ENCODE measurements at regions of chr3 and their contacts with region 1.

Region 1: DNA sequence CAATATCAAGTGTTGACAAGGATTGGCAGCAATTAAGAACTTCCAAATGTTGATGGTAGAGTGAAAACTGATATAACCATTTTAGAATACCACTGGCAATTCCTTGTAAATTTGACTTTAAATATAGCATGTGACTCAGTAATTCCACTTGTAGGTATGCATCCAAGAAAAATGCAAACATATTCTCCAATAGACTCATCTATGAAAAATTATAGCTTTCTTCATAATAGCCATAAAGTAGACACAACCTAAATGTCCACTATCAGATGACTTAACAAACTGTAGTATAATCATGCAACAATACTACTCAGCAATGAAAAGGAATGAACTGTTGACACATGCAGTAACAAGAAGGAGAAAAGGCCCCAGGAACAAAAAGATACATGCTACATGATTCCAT is 988.1 kb downstream of the FHIT start:
- DNase-seq: no peak
- ATAC-seq: no peak
- H3K4me3 ChIP-seq: no peak overlapping the region
- H3K27ac ChIP-seq: no peak overlapping the region
- H3K4me1 ChIP-seq: no peaks in the 10 kb centered on the region
- H3K27me3 ChIP-seq: no peaks in the 10 kb centered on the region; the same call in 1 of the 2 replicates
- CTCF ChIP-seq: no peak

Region 2: GRCh38 chr3:59968513-59969045 is 294.6 kb before region 1 on chr3:
- CTCF ChIA-PET with region 1: no interaction called
- POLR2A ChIA-PET with region 1: no interaction called
- intact Hi-C with region 1: no loop called
- DNase-seq: no peak
- ATAC-seq: no peak
- H3K4me3 ChIP-seq: no peak overlapping the region
- H3K27ac ChIP-seq: no peak overlapping the region
- H3K4me1 ChIP-seq: no peaks in the 10 kb centered on the region
- H3K27me3 ChIP-seq: no peaks in the 10 kb centered on the region
- CTCF ChIP-seq: peak; percentile 26; the same call in 1 of the 2 replicates

Region 3: DNA sequence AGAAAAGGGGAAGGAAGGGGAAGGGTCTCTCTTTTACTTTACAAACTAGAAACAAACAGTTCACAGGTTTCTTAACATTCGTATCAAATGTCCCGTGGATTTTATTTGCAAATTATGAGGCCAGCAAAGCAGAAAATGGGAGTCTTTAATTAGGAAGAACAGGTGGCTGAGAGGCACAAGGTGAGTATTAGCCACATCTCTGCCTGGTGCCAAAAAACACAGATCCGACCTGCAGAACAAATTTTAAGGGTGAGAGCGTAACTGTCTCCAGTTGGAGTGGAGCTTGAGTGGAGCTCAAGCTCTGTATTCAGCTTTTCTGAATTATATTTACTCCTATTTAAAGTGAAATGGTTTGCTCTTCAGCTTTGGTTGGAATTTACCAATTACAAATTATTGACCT is 16.8 kb before region 1 on chr3:
- CTCF ChIA-PET with region 1: no interaction called
- POLR2A ChIA-PET with region 1: no interaction called
- intact Hi-C with region 1: loop called (anchors 1 kb)
- DNase-seq: no peak
- ATAC-seq: no peak
- H3K4me3 ChIP-seq: no peak overlapping the region
- H3K27ac ChIP-seq: no peak overlapping the region
- H3K4me1 ChIP-seq: no peaks in the 10 kb centered on the region
- H3K27me3 ChIP-seq: 0 out of 2 replicates have a peak, but pooled peaks cover 9% of the 10 kb centered on the region
- CTCF ChIP-seq: no peak

Region 4: DNA sequence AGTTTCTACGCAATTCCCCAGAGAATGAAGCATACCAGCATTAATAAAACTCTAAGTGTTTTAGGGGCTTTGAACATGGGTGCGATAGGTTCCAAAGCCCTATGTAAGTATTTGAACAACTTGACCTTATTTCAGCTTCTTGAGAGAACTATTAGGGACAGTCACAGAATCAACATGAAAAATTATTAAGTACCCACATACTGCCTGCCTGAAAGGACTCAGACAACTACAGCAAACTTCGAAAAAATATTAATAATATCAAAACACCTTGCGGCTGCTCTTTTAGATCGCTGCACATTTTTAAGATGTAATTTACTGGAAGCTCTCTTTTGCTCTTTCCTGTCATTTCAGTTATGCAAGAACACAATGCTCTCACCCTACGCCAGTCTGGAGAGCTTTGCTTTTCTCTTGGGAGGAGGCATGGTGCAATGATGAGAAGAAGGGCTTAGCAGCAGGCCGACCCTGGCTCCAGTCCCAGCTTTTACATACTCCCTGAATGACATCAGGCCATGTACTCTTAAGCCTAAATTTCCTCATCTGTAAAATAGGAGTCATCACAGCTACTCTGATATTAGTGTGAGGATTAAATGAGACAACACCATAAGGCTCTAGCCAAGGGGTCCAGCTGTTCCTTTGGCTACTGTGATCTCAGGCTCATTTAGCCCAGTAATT is 347.4 kb after region 1 on chr3:
- CTCF ChIA-PET with region 1: no interaction called
- POLR2A ChIA-PET with region 1: no interaction called
- intact Hi-C with region 1: no loop called
- DNase-seq: no peak
- ATAC-seq: no peak
- H3K4me3 ChIP-seq: no peak overlapping the region
- H3K27ac ChIP-seq: no peak overlapping the region
- H3K4me1 ChIP-seq: peaks cover 6% of the 10 kb centered on the region; the same call in 1 of the 2 replicates
- H3K27me3 ChIP-seq: no peaks in the 10 kb centered on the region
- CTCF ChIP-seq: no peak

Measured in PC-3 (cell line).